Prostate gland (tissue), 2 donors: ENCODE measurements at regions of chr19 and their contacts with region 1.

Region 1: DNA sequence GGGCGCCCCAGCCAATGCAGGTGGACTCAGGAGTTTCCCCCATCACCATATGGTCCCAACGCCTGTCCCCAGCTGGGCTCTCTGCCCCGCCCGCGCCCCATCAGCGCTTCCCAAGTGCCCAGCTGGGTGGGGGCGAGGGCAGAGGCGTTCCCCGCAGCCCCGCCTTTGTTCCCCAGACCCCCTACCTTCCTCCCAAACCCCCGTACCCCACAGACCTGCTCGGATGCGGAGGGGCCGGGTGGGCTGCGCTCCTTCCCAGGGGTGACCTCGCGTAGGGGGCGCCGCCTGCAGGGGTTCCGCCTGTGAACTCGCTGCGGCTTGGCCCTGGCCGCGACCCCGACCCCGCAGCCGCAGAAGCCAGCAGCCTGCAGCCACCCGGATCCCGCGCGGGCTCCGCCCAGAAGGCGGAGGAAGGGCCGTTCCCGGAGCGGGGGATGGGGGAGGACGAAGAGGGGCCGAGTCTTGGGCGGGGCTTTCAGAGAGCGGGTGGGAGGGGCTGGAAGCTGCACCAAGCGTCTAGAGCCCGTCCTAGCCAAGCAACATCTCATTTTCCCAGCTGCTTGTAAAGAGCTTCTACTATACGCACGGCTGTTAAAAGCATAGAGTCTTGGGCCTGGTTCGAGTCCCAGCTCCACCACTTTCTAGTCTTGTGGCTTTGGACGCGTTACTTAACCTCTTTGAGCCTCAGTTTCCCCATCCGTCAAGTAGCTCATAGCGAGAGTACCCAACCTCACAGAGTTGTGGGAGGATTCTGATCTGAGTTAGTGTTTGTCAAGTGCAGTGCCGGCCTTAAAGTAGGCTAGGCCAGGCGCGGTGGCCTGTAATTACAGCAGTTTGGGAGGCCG is at the start of gene RAB3D:
- DNase-seq: peak; percentile 93
- H3K4me3 ChIP-seq: peak within 1 kb of the TSS; percentile 75 to 83
- H3K27ac ChIP-seq: peak within 1 kb of the TSS; percentile 87 to 90
- H3K4me1 ChIP-seq: peaks cover 12% of the 10 kb centered on the region
- H3K27me3 ChIP-seq: no peaks in the 10 kb centered on the region
- CTCF ChIP-seq: no peak
- POLR2A ChIP-seq: peak; percentile 77
- total RNA-seq, gene RAB3D: 33.9 to 81.2 TPM

Region 2: DNA sequence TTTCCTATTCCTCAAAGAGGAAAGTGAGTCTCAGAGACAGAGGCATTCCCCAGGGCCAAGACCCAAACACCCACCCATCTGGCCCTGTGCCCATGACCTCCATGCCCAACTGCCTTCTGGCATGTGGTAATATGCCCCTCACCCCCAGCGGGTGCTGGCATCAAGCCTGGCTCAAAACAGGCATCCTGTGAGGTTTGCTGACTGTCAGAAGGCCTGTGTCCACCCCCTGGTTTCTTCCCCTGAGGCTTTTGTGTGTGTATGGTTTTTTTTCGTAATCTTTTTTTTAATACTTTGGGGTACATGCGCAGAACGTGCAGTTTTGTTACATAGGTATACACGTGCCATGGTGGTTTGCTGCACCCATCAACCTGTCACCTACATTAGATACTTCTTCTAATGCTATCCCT is 134.5 kb before region 1 on chr19:
- intact Hi-C with region 1: no loop called
- DNase-seq: no peak
- H3K4me3 ChIP-seq: no peak overlapping the region
- H3K27ac ChIP-seq: peak overlapping the region; percentile 74 to 85
- H3K4me1 ChIP-seq: no peaks in the 10 kb centered on the region
- H3K27me3 ChIP-seq: no peaks in the 10 kb centered on the region
- CTCF ChIP-seq: no peak
- POLR2A ChIP-seq: no peak

Region 3: DNA sequence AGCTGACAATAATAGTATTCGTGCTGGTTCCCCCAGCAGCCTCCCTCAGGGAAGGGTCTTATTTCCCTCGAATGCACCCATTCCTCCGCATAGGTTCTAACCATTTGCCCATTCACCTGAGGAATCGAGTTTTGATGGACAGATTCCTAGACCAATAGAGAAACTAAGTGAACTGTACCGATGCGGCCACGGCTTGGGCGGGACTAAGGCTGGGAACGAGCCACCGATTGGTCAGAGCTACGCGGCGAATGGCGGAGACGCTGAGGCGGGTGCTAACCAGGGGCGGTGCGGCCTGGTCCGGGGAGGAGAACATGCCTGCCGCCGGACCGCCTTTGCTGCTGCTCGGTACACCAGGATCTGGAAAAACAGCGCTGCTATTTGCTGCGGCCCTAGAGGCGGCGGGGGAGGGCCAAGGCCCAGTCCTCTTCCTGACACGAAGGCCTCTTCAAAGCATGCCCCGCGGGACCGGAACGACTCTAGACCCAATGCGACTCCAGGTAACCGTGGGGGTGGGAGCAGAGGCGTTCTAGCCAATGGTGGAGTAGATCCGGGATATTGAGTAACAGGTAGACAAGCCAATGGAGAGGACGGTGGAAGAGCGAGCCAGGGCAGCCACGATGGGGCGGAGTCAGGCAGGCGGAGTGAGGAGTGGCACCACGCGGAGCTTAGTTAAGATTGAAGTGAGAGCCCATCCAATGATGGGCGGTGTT is 35.1 kb after region 1 on chr19 and contains the start of gene SWSAP1:
- intact Hi-C with region 1: loop called (anchors 5 kb)
- DNase-seq: peak; percentile 99
- H3K4me3 ChIP-seq: peak within 1 kb of the TSS; percentile 46 to 58
- H3K27ac ChIP-seq: peak within 1 kb of the TSS; percentile 93 to 94
- H3K4me1 ChIP-seq: peaks cover 9% of the 10 kb centered on the region
- H3K27me3 ChIP-seq: no peaks in the 10 kb centered on the region
- CTCF ChIP-seq: no peak
- POLR2A ChIP-seq: no peak
- total RNA-seq, gene SWSAP1: 4.1 to 6.3 TPM

Region 4: GRCh38 chr19:11405846-11406643 is 66.6 kb after region 1 on chr19:
- intact Hi-C with region 1: no loop called
- DNase-seq: no peak
- H3K4me3 ChIP-seq: no peak overlapping the region
- H3K27ac ChIP-seq: no peak overlapping the region
- H3K4me1 ChIP-seq: no peaks in the 10 kb centered on the region
- H3K27me3 ChIP-seq: no peaks in the 10 kb centered on the region
- CTCF ChIP-seq: no peak
- POLR2A ChIP-seq: no peak